AG04450 (cell line): ENCODE measurements at regions of chr2 and their contacts with region 1.

Region 1: GRCh38 chr2:174697255-174697654 is 67.0 kb downstream of the CHRNA1 start:
- DNase-seq: no peak
- H3K4me3 ChIP-seq: no peak overlapping the region
- H3K27ac ChIP-seq: no peak overlapping the region
- H3K27me3 ChIP-seq: peaks cover 15% of the 10 kb centered on the region
- CTCF ChIP-seq: peak; percentile 93

Region 2: DNA sequence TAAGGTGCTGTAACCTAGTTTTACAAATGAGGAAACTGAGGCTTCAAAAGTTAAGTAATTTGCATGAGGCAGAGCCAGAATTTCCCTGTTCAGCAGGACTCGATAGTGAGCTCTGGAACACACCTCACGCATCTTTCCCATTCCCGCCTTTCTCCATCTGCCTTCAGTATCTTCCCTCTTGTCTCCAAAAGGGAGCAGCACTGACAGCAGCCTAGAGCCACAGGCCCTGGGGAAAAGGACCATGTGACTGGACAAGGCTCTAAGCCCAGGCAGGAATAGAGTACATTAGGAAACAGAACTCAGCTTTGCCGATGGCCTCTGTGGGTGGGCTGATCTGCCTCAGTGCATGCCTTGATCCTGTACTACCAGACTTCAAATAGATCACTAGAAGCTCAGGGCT is 231.9 kb before region 1 on chr2:
- CTCF ChIA-PET with region 1: interaction called, 55 read pairs
- POLR2A ChIA-PET with region 1: no interaction called
- DNase-seq: no peak
- H3K4me3 ChIP-seq: no peak overlapping the region
- H3K27ac ChIP-seq: no peak overlapping the region
- H3K27me3 ChIP-seq: no peaks in the 10 kb centered on the region
- CTCF ChIP-seq: peak; percentile 11; the same call in 1 of the 2 replicates

Region 3: GRCh38 chr2:174748948-174749347 is 51.7 kb after region 1 on chr2:
- CTCF ChIA-PET with region 1: interaction called, 34 read pairs
- POLR2A ChIA-PET with region 1: no interaction called
- DNase-seq: peak; percentile 16
- H3K4me3 ChIP-seq: no peak overlapping the region
- H3K27ac ChIP-seq: no peak overlapping the region
- H3K27me3 ChIP-seq: peaks cover 2% of the 10 kb centered on the region
- CTCF ChIP-seq: peak; percentile 83

Region 4: GRCh38 chr2:174985630-174986029 is 288.4 kb after region 1 on chr2:
- CTCF ChIA-PET with region 1: interaction called, 135 read pairs
- POLR2A ChIA-PET with region 1: interaction called, 4 read pairs
- DNase-seq: no peak
- H3K4me3 ChIP-seq: no peak overlapping the region
- H3K27ac ChIP-seq: no peak overlapping the region
- H3K27me3 ChIP-seq: no peaks in the 10 kb centered on the region
- CTCF ChIP-seq: peak; percentile 74

Region 5: DNA sequence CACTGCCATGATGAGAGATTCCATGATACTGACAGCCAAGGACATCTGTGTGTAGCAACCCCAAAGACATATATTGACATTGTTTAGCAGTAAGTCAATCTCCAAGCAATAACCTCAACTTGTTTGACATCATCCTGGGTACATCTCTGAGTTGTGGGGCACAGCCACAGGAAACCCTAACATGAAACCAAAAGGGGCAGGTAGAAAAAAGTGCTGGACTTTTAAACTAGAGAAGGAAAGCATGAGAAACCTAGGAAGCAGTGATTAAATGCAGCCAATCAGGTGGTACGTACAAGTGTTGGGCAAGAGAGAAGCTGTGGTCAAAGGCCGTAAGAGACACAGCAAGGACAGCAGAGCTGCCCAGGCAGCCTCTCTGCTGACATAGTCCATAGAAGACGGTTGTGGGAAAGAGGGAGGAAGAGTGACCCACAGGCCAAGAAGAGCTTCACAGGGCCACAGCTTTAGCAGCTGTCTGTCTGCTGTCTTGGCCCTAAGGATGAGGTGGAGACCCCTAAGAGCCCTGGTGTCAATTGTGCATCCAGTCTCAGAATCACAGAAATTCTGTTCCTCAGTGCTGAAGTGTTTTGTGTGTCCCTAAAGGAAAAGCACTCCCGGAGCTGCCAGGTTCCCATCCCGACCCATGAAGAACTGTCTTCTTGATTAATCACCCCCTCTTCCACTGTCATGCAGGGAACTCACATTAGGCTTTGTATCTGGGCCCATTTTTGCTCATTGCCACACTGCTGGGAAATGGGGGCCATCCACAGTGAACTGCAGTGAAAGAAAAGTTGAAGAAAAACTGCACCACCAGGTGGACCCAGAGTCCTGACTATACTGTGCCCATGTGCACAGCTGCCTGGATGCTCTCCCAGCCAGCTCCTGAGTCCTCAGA is 333.4 kb after region 1 on chr2:
- CTCF ChIA-PET with region 1: interaction called, 22 read pairs
- POLR2A ChIA-PET with region 1: no interaction called
- DNase-seq: peak; percentile 8
- H3K4me3 ChIP-seq: no peak overlapping the region
- H3K27ac ChIP-seq: peak overlapping the region; percentile 0
- H3K27me3 ChIP-seq: no peaks in the 10 kb centered on the region
- CTCF ChIP-seq: peak; percentile 59

Region 6: DNA sequence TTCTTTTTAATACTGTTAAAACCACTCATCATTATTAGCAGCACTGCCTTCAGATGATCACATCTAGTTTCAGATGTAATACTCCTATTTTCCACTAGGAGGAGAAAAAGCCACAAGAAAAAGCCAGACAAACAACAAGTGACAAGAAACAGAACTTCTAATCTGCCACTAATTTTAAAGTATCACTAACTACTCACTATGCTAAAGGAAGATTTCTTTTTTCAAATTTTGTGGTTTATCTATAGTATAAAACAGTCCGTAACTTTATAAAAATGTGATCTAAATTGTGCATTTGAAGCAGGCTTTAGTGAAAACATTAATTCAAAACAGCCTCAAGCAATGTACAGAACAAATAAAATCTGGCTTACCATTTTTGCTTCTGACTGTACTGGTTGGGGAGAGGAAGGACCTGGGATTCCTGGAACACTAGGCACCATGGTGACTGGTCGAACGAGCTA is 414.0 kb after region 1 on chr2:
- CTCF ChIA-PET with region 1: interaction called, 21 read pairs
- POLR2A ChIA-PET with region 1: no interaction called
- DNase-seq: no peak
- H3K4me3 ChIP-seq: no peak overlapping the region
- H3K27ac ChIP-seq: no peak overlapping the region
- H3K27me3 ChIP-seq: no peaks in the 10 kb centered on the region
- CTCF ChIP-seq: peak; percentile 73

Region 7: GRCh38 chr2:175326801-175327200 is 629.5 kb after region 1 on chr2:
- CTCF ChIA-PET with region 1: interaction called, 16 read pairs
- POLR2A ChIA-PET with region 1: no interaction called
- DNase-seq: no peak
- H3K4me3 ChIP-seq: no peak overlapping the region
- H3K27ac ChIP-seq: no peak overlapping the region
- H3K27me3 ChIP-seq: no peaks in the 10 kb centered on the region
- CTCF ChIP-seq: no peak